PC-3 (cell line): ENCODE measurements at regions of chr16 and their contacts with region 1.

Region 1: DNA sequence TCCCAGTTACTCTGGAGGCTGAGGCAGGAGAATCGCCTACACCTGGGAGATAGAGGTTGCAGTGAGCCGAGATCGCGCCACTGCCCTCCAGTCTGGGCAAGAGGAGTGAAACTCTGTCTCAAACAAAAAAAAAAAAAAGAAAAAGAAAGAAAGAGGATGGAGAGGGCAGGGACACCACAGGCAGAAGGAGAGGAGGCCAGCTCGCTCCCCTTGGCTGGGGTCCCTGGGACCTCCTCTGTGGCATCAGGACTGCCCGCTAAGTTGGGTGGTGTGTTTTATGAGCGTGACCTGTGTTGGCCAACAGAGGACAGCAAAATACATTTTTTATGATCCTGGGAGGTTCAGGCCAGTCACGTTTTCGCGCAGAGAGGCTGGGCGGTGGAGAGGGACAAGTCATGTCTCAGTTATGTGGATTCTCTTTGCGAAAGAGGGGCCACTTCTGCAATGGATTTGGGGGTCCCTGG is 229.6 kb downstream of the MRTFB start:
- DNase-seq: peak; percentile 76
- ATAC-seq: peak; percentile 78
- H3K4me3 ChIP-seq: peak overlapping the region; percentile 70
- H3K27ac ChIP-seq: no peak overlapping the region
- H3K4me1 ChIP-seq: peaks cover 13% of the 10 kb centered on the region
- H3K27me3 ChIP-seq: no peaks in the 10 kb centered on the region
- CTCF ChIP-seq: peak; percentile 66

Region 2: GRCh38 chr16:14070877-14071575 is 229.7 kb before region 1 on chr16 and contains the start of gene MRTFB:
- CTCF ChIA-PET with region 1: no interaction called
- POLR2A ChIA-PET with region 1: no interaction called
- intact Hi-C with region 1: no loop called
- DNase-seq: peak; percentile 66
- ATAC-seq: peak; percentile 85
- H3K4me3 ChIP-seq: peak within 1 kb of the TSS; percentile 97
- H3K27ac ChIP-seq: peak within 1 kb of the TSS; percentile 30
- H3K4me1 ChIP-seq: peaks cover 18% of the 10 kb centered on the region
- H3K27me3 ChIP-seq: no peaks in the 10 kb centered on the region
- CTCF ChIP-seq: no peak
- total RNA-seq, gene MRTFB: 8.1 and 12.7 TPM in 2 replicates

Region 3: DNA sequence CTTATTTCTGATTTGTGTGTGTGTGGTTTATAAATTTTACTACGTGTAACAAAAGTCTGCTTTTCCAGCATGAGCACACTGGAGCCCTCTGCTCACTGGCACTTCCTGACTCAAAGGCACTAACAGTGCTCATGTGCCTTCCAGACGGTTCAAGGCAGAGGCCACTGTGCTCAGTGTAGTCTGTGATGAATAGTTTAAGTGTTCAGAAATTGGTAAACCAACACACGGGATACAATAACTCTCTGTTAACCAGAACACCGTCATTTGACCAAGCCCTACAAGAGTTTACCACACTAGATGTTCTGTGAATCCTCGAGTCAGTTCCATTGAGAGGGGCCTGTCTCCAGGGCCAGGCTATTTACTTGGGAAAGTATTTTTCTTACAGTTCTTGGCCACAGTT is 37.7 kb before region 1 on chr16:
- CTCF ChIA-PET with region 1: no interaction called
- POLR2A ChIA-PET with region 1: no interaction called
- intact Hi-C with region 1: no loop called
- DNase-seq: no peak
- ATAC-seq: no peak
- H3K4me3 ChIP-seq: no peak overlapping the region
- H3K27ac ChIP-seq: no peak overlapping the region
- H3K4me1 ChIP-seq: no peaks in the 10 kb centered on the region
- H3K27me3 ChIP-seq: no peaks in the 10 kb centered on the region
- CTCF ChIP-seq: no peak

Region 4: DNA sequence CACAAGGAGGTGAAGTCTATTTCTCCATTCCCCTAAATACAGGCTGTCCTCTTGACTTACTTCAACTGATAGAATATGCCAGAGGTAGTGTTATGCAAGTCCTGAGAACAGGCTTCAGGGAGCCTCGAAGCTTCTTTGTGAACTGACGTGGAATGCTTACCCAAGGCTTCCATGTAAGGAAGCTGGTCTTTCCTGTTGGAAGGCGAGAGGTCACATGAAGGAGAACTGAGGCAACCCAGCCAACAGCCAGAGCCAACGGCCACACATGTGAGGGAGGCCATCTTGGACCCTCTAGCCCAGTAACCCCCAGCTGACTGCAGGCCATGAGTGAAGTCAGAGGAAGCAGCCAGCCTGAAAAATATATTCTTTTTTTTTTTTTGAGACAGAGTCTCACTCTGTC is 38.3 kb after region 1 on chr16:
- CTCF ChIA-PET with region 1: no interaction called
- POLR2A ChIA-PET with region 1: interaction called, 10 read pairs
- intact Hi-C with region 1: no loop called
- DNase-seq: no peak
- ATAC-seq: no peak
- H3K4me3 ChIP-seq: no peak overlapping the region
- H3K27ac ChIP-seq: no peak overlapping the region
- H3K4me1 ChIP-seq: no peaks in the 10 kb centered on the region
- H3K27me3 ChIP-seq: no peaks in the 10 kb centered on the region
- CTCF ChIP-seq: no peak

Region 5: GRCh38 chr16:14389359-14389758 is 88.6 kb after region 1 on chr16:
- CTCF ChIA-PET with region 1: no interaction called
- POLR2A ChIA-PET with region 1: no interaction called
- intact Hi-C with region 1: loop called (anchors 10 kb)
- DNase-seq: no peak
- ATAC-seq: no peak
- H3K4me3 ChIP-seq: no peak overlapping the region
- H3K27ac ChIP-seq: no peak overlapping the region
- H3K4me1 ChIP-seq: peaks cover 7% of the 10 kb centered on the region; the same call in 1 of the 2 replicates
- H3K27me3 ChIP-seq: no peaks in the 10 kb centered on the region
- CTCF ChIP-seq: no peak

Region 6: GRCh38 chr16:14455576-14455975 is 154.8 kb after region 1 on chr16:
- CTCF ChIA-PET with region 1: no interaction called
- POLR2A ChIA-PET with region 1: no interaction called
- intact Hi-C with region 1: loop called (anchors 5 kb)
- DNase-seq: peak; percentile 73
- ATAC-seq: peak; percentile 94
- H3K4me3 ChIP-seq: no peak overlapping the region
- H3K27ac ChIP-seq: peak overlapping the region; percentile 8; the same call in 1 of the 2 replicates
- H3K4me1 ChIP-seq: peaks cover 19% of the 10 kb centered on the region
- H3K27me3 ChIP-seq: no peaks in the 10 kb centered on the region
- CTCF ChIP-seq: no peak

Region 7: GRCh38 chr16:14529010-14529669 is 228.4 kb after region 1 on chr16:
- CTCF ChIA-PET with region 1: no interaction called
- POLR2A ChIA-PET with region 1: no interaction called
- intact Hi-C with region 1: loop called (anchors 1 kb)
- DNase-seq: peak; percentile 80
- ATAC-seq: peak; percentile 84
- H3K4me3 ChIP-seq: no peak overlapping the region; the same call in 1 of the 2 replicates
- H3K27ac ChIP-seq: peak overlapping the region; percentile 37
- H3K4me1 ChIP-seq: peaks cover 12% of the 10 kb centered on the region
- H3K27me3 ChIP-seq: no peaks in the 10 kb centered on the region
- CTCF ChIP-seq: peak; percentile 82